BJ (cell line): ENCODE measurements at regions of chr11 and their contacts with region 1.

Region 1: GRCh38 chr11:19326499-19326898 is 85.8 kb upstream of the E2F8 start:
- DNase-seq: no peak
- H3K4me3 ChIP-seq: no peak overlapping the region
- H3K27me3 ChIP-seq: peaks cover 17% of the 10 kb centered on the region
- CTCF ChIP-seq: peak; percentile 41

Region 2: DNA sequence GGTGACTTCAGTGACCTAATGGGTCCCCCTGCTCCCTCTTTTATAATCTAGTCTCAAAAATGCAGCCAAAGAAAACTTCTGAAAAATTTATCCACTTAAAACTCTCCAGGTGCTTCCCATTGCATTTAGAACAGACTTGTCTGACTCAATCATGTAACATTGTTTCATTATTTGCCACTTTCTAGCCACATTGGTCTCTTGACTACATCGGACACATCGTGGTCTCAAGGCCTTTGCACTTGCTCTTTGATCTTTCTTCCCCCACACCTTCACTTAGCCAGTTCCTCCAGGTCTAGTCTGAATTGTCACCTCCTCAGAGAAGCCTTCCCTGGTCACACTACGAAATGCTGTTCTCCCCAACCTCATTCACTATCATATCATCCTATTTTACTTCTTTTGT is 11.3 kb after region 1 on chr11:
- CTCF ChIA-PET with region 1: interaction called, 13 read pairs
- POLR2A ChIA-PET with region 1: no interaction called
- DNase-seq: no peak
- H3K4me3 ChIP-seq: no peak overlapping the region
- H3K27me3 ChIP-seq: peaks cover 20% of the 10 kb centered on the region
- CTCF ChIP-seq: no peak

Region 3: DNA sequence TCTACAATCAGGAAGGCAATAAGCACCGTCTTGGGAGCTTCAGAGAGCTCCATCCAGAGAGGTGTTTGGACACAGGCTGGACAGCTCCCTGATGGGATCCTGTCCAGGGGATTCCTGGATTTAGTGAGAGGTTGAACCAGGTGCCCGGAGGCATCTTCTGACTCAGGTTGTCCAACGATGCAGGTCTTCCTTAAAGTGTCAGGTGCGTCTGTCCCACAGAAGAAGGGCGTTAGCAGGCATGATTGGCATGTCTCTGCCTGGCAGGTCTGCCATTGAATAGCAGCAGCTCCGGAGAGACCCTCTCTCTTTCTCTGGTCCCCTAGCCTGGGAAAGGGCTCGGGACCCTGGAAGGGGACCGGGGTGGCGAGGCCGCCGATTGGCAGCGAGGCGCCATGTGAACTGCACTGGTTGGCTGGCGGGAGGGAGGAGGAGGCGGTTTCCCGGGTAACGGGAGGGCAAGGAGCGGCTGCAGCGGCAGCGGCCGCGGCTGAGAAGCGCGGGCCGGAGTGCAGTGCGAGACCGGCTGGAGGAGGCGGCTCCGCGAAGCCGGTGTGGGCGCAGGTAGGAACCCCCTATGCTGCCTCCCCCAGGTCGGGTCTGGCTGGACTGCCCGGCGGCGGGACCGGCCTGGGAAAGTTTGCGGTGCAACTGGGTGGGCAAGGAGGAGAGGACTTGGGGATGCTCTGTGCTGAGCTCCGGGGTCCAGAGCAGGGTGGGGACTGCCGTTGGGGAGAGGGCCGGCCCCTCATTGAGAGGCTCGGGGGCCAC is 18.4 kb after region 1 on chr11:
- CTCF ChIA-PET with region 1: interaction called, 11 read pairs
- POLR2A ChIA-PET with region 1: no interaction called
- DNase-seq: no peak
- H3K4me3 ChIP-seq: peak overlapping the region; percentile 22
- H3K27me3 ChIP-seq: peaks cover 42% of the 10 kb centered on the region
- CTCF ChIP-seq: no peak

Region 4: DNA sequence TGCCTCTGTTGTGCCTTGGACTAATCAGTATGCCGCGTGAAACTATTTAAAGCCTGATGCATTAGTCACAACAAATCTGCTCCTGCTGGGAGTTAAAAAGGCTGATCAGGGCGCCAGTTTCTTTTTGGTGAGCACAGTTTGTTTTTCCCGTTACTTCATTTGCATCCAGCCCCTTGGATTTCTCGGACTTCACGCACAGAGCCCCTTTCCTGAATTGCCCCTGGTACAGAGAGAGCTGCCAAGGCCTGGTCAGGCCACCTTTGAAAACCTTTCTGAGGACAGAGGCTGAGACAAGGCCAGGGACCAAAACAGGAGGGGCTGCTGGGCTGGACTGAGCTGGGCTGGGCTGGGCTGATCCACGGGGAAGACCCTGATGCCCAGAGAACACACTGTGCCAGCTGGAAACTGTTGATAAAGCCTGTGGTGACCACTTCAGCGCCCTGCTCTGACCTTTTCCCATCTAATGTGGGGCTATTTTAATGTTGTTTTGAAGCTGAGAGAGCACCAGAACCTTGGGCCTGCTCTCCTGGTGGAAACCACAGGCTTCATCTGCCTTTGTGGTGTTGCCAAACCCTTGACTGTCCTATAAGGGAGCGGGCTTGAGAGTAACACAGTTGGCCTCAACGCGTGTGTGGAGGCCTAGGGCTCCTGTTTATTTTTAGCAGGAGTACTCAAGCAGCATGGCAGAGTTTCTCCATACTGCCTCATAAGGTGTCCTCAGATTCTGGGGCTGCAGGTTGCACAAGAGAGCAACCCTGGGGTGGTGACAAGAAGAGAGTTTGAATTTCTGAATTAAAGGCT is 430.4 kb after region 1 on chr11:
- CTCF ChIA-PET with region 1: no interaction called
- POLR2A ChIA-PET with region 1: no interaction called
- DNase-seq: no peak
- H3K4me3 ChIP-seq: no peak overlapping the region
- H3K27me3 ChIP-seq: no peaks in the 10 kb centered on the region
- CTCF ChIP-seq: no peak